Prostate gland (tissue), 2 donors: ENCODE measurements at regions of chr3 and their contacts with region 1.

Region 1: DNA sequence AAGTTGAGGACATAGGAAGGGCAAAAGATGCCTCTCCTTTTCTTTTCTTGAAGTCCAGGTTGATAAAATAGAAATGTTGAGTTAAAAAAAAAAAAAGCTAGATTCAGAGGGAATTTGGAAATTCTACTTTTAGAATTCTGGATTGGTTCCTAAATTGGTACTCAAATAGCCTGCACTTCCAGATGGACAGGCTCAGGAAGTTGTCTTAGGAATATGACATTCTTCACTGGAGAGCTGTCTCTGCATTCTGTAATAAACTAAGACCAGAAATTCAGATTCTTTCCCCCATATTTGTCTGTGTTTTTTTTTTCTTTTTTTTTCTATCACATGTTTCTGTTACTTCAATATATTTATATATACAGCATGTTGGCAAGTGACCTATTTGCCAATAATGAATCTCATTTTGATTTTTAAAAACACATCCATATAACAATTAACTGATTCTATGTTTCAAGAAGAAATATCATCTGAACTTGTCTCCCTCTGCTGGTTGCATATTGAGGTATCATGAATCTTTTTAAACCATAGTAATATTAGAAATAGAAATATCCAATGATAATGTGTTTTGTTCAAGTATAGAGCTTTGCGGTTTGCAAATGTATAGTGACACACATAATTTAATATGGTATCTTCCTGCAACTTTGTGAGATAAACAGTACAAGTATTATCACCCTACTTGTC is 8.5 kb upstream of the LSAMP start:
- DNase-seq: no peak
- H3K4me3 ChIP-seq: no peak overlapping the region
- H3K27ac ChIP-seq: no peak overlapping the region
- H3K4me1 ChIP-seq: no peaks in the 10 kb centered on the region
- H3K27me3 ChIP-seq: no peaks in the 10 kb centered on the region
- CTCF ChIP-seq: peak in 2 of 4 experiments; percentile 29 to 33
- POLR2A ChIP-seq: no peak

Region 2: DNA sequence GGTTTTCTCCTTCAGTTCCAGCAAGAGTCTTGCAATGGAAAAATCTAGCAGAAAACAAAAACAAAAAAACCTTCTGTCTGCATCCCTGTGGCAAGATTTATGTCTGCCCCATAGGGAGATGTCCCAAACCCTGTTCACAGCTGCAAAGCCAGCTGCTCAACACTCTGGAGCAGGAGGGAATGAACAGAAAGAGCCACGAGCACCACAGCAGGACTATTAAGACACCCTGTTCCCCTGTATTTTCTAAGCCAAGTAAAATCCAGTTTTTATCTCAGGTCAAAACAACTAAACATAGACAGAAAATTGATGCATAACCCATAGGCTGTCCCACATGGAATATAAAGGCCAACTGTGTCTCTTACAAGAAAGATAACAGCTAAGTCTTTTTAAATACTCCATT is 366.4 kb before region 1 on chr3:
- intact Hi-C with region 1: no loop called
- DNase-seq: no peak
- H3K4me3 ChIP-seq: no peak overlapping the region
- H3K27ac ChIP-seq: no peak overlapping the region
- H3K4me1 ChIP-seq: no peaks in the 10 kb centered on the region
- H3K27me3 ChIP-seq: no peaks in the 10 kb centered on the region
- CTCF ChIP-seq: no peak
- POLR2A ChIP-seq: no peak

Region 3: DNA sequence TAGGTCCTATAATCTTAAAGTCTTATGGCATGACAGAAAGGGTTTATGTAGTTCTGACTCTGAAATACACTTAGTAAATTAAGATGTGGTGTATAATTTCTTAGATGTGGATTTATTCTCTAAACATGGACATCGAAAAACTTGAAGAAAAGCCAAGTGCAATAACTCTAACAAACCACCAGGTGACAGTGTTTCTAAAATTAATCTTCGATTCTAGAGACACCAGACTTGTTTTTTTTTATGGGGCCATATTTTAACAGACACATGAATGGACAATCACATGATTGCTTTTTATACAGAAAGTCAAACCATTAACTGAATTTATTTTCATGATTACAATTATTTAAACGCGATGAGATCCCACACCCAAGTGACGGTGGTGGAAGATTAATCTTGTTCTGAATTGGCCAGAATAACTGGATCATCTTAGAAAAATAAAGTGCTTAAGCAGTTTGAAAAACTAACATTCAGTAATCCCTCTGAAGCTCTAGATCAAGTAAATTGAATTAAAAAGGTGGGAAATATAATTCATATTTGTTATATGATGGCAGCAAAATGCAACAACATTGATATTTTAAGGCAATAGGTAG is 313.6 kb before region 1 on chr3:
- intact Hi-C with region 1: loop called (anchors 5 kb)
- DNase-seq: no peak
- H3K4me3 ChIP-seq: no peak overlapping the region
- H3K27ac ChIP-seq: no peak overlapping the region
- H3K4me1 ChIP-seq: no peaks in the 10 kb centered on the region
- H3K27me3 ChIP-seq: no peaks in the 10 kb centered on the region
- CTCF ChIP-seq: peak; percentile 55 to 90 (median 79)
- POLR2A ChIP-seq: no peak